Caco-2 (cell line): ENCODE measurements at regions of chr5 and their contacts with region 1.

Region 1: GRCh38 chr5:54310433-54311175 is at the start of gene ARL15:
- DNase-seq: peak; percentile 99
- H3K4me3 ChIP-seq: peak within 1 kb of the TSS; percentile 93
- H3K4me3 Mint-ChIP-seq: peak within 1 kb of the TSS; percentile 91
- H3K27ac Mint-ChIP-seq: peak within 1 kb of the TSS; percentile 96
- H3K4me1 ChIP-seq: peaks cover 34% of the 10 kb centered on the region
- H3K4me1 Mint-ChIP-seq: peaks cover 34% of the 10 kb centered on the region
- H3K27me3 ChIP-seq: no peaks in the 10 kb centered on the region
- H3K27me3 Mint-ChIP-seq: peaks cover 3% of the 10 kb centered on the region
- CTCF ChIP-seq: no peak
- total RNA-seq, gene ARL15: 122 and 140 TPM in 2 replicates

Region 2: GRCh38 chr5:54252002-54252401 is 58.6 kb before region 1 on chr5:
- CTCF ChIA-PET with region 1: interaction called, 5 read pairs
- POLR2A ChIA-PET with region 1: interaction called, 14 read pairs
- intact Hi-C with region 1: no loop called
- DNase-seq: peak; percentile 40 to 59
- H3K4me3 ChIP-seq: no peak overlapping the region
- H3K4me3 Mint-ChIP-seq: no peak overlapping the region
- H3K27ac Mint-ChIP-seq: peak overlapping the region; percentile 30
- H3K4me1 ChIP-seq: peaks cover 42% of the 10 kb centered on the region
- H3K4me1 Mint-ChIP-seq: peaks cover 9% of the 10 kb centered on the region
- H3K27me3 ChIP-seq: no peaks in the 10 kb centered on the region
- H3K27me3 Mint-ChIP-seq: no peaks in the 10 kb centered on the region
- CTCF ChIP-seq: no peak

Region 3: GRCh38 chr5:54385989-54386388 is 75.4 kb after region 1 on chr5:
- CTCF ChIA-PET with region 1: interaction called, 3 read pairs
- POLR2A ChIA-PET with region 1: interaction called, 6 read pairs
- intact Hi-C with region 1: loop called (anchors 1 kb)
- DNase-seq: no peak
- H3K4me3 ChIP-seq: no peak overlapping the region
- H3K4me3 Mint-ChIP-seq: no peak overlapping the region
- H3K27ac Mint-ChIP-seq: no peak overlapping the region
- H3K4me1 ChIP-seq: peaks cover 47% of the 10 kb centered on the region
- H3K4me1 Mint-ChIP-seq: peaks cover 26% of the 10 kb centered on the region
- H3K27me3 ChIP-seq: no peaks in the 10 kb centered on the region
- H3K27me3 Mint-ChIP-seq: no peaks in the 10 kb centered on the region
- CTCF ChIP-seq: no peak

Region 4: DNA sequence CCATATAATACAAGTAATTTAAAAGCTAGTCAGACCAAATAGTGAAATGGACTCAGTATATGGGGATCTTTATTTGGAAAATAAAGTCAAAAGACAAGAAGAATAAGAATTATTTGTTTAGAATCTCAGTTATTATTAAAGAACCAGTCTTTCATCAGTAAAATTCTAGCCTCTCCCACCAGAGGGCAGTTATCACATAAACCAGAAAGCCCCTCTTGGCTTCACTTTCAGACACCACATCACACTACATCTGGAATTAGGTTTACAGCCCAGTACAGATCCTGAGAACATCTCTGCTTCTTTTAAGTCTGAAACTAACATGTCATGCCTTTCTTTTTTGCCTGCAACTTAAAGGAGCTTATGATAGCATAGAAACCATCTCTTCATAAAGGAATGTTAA is 132.7 kb after region 1 on chr5:
- CTCF ChIA-PET with region 1: interaction called, 6 read pairs
- POLR2A ChIA-PET with region 1: interaction called, 31 read pairs
- intact Hi-C with region 1: loop called (anchors 1 kb)
- DNase-seq: peak in 1 of 2 experiments; percentile 57
- H3K4me3 ChIP-seq: no peak overlapping the region
- H3K4me3 Mint-ChIP-seq: no peak overlapping the region
- H3K27ac Mint-ChIP-seq: peak overlapping the region; percentile 56
- H3K4me1 ChIP-seq: peaks cover 91% of the 10 kb centered on the region
- H3K4me1 Mint-ChIP-seq: peaks cover 51% of the 10 kb centered on the region
- H3K27me3 ChIP-seq: no peaks in the 10 kb centered on the region
- H3K27me3 Mint-ChIP-seq: no peaks in the 10 kb centered on the region
- CTCF ChIP-seq: peak; percentile 50 to 51

Region 5: DNA sequence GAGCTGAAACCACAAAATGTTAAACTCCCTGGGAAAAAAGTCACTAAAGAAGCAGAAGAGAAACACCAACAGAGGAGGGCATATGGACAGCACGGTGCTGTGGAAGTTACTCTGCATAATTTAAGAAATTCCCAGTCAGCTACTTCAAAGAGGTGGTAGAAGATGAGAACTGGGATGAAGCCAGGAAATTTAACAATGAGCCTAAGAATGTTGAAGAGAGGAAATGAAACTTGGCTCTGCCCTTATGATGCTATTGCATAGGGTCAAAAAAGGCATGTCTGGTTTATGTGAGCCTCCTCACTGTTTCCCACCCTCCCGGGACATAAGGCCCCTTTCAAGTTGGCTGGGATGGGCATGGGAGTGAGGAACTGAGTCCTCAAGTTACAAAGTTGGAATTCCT is 181.6 kb after region 1 on chr5:
- CTCF ChIA-PET with region 1: interaction called, 14 read pairs
- POLR2A ChIA-PET with region 1: interaction called, 19 read pairs
- intact Hi-C with region 1: loop called (anchors 1 kb)
- DNase-seq: no peak
- H3K4me3 ChIP-seq: no peak overlapping the region
- H3K4me3 Mint-ChIP-seq: no peak overlapping the region
- H3K27ac Mint-ChIP-seq: peak overlapping the region; percentile 19
- H3K4me1 ChIP-seq: peaks cover 8% of the 10 kb centered on the region
- H3K4me1 Mint-ChIP-seq: no peaks in the 10 kb centered on the region
- H3K27me3 ChIP-seq: no peaks in the 10 kb centered on the region
- H3K27me3 Mint-ChIP-seq: no peaks in the 10 kb centered on the region
- CTCF ChIP-seq: no peak

Region 6: GRCh38 chr5:54547711-54548250 is 237.2 kb after region 1 on chr5:
- CTCF ChIA-PET with region 1: no interaction called
- POLR2A ChIA-PET with region 1: no interaction called
- intact Hi-C with region 1: no loop called
- DNase-seq: no peak
- H3K4me3 ChIP-seq: no peak overlapping the region
- H3K4me3 Mint-ChIP-seq: no peak overlapping the region
- H3K27ac Mint-ChIP-seq: no peak overlapping the region
- H3K4me1 ChIP-seq: no peaks in the 10 kb centered on the region
- H3K4me1 Mint-ChIP-seq: no peaks in the 10 kb centered on the region
- H3K27me3 ChIP-seq: no peaks in the 10 kb centered on the region
- H3K27me3 Mint-ChIP-seq: no peaks in the 10 kb centered on the region
- CTCF ChIP-seq: no peak